Activated B cell treated with CpG ODN at 0.5 μM for 24 hours (primary cell): ENCODE measurements at regions of chr12 and their contacts with region 1.

Region 1: GRCh38 chr12:3872800-3873636 is at the start of gene PARP11:
- DNase-seq: peak; percentile 91
- ATAC-seq: peak; percentile 98
- H3K4me3 Mint-ChIP-seq: peak within 1 kb of the TSS; percentile 91
- H3K27ac Mint-ChIP-seq: peak within 1 kb of the TSS; percentile 93
- H3K4me1 Mint-ChIP-seq: peaks cover 48% of the 10 kb centered on the region
- H3K27me3 Mint-ChIP-seq: peaks cover 3% of the 10 kb centered on the region
- CTCF ChIP-seq: no peak
- total RNA-seq, gene PARP11: 21.4 and 27.2 TPM in 2 replicates

Region 2: DNA sequence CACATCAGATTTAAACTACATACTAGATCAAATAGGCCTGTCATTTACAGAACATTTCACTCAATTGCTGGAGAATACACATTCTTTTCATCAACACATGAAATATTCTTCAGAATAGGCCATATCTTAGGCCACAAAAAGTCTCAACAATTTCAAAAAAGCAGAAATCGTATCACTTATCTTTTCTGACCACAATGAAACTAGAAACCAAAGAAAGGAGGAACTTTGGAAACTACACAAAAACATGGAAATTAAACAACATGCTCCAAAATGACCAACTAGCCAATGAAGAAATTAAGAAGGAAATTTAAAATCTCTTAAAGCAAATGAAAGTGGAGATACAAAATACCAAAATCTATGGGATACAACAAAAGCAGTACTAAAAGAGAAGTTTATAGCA is 34.9 kb before region 1 on chr12:
- CTCF ChIA-PET with region 1: no interaction called
- POLR2A ChIA-PET with region 1: interaction called, 5 read pairs
- intact Hi-C with region 1: loop called (anchors 1 kb)
- DNase-seq: no peak
- ATAC-seq: no peak
- H3K4me3 Mint-ChIP-seq: peak overlapping the region; percentile 83
- H3K27ac Mint-ChIP-seq: peak overlapping the region; percentile 88
- H3K4me1 Mint-ChIP-seq: peaks cover 42% of the 10 kb centered on the region
- H3K27me3 Mint-ChIP-seq: no peaks in the 10 kb centered on the region
- CTCF ChIP-seq: no peak

Region 3: DNA sequence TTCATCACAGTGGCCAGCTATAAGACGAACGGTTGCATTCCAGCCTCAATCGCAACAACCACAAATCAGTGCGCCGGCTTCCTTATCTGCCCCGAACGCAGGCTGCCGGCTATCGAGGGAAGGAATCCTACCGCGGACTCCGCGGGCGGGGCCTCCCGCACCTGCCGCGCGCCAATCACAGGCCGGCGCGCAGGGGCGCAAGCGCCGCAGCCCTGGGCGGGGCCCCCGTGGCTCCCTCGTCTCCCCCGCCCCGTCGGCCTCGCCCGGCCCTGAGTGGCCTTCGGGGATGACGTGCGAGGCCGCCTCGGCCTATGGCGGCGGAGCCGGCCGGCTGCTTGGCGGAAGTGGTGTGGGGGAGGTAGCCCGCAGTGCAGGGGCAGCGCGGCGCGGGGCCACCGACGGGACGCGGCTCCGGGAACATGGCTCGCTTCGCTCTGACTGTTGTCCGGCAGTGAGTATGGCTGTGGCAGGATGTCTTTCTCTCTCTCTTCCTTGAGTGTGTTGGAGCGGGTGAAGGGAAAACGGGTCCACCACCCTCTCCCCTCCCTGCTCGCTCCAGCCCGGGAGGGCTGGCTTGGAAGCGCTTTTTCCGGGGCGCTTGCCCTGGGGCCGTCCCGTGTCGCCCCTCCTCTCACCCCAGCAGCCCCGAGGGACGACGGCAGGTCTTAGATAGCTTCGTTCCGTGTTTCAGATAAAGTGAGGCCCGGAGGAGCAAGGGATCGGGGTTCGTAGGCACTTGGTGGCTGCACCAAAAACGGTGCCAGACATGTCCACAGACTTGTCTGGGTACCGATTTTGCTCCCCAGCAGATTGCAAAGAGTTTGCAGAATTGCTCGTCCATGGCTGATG is 448.1 kb after region 1 on chr12 and contains the start of gene TIGAR:
- CTCF ChIA-PET with region 1: no interaction called
- POLR2A ChIA-PET with region 1: interaction called, 4 read pairs
- intact Hi-C with region 1: loop called (anchors 1 kb)
- DNase-seq: peak; percentile 94
- ATAC-seq: peak; percentile 97
- H3K4me3 Mint-ChIP-seq: peak within 1 kb of the TSS; percentile 95
- H3K27ac Mint-ChIP-seq: peak within 1 kb of the TSS; percentile 92
- H3K4me1 Mint-ChIP-seq: peaks cover 34% of the 10 kb centered on the region
- H3K27me3 Mint-ChIP-seq: no peaks in the 10 kb centered on the region
- CTCF ChIP-seq: no peak
- total RNA-seq, gene TIGAR: 10.0 and 10.2 TPM in 2 replicates

Region 4: GRCh38 chr12:4379405-4379804 is 506.4 kb after region 1 on chr12 and contains the start of gene FGF23:
- CTCF ChIA-PET with region 1: no interaction called
- POLR2A ChIA-PET with region 1: no interaction called
- intact Hi-C with region 1: no loop called
- DNase-seq: no peak
- ATAC-seq: no peak
- H3K4me3 Mint-ChIP-seq: no peak within 1 kb of the TSS
- H3K27ac Mint-ChIP-seq: no peak within 1 kb of the TSS
- H3K4me1 Mint-ChIP-seq: no peaks in the 10 kb centered on the region
- H3K27me3 Mint-ChIP-seq: peaks cover 17% of the 10 kb centered on the region
- CTCF ChIP-seq: no peak
- total RNA-seq, gene FGF23: not detected in 2 replicates

Region 5: GRCh38 chr12:4648501-4649357 is 775.7 kb after region 1 on chr12 and contains the starts of genes AKAP3 and NDUFA9:
- CTCF ChIA-PET with region 1: no interaction called
- POLR2A ChIA-PET with region 1: no interaction called
- intact Hi-C with region 1: loop called (anchors 1 kb)
- DNase-seq: peak; percentile 67
- ATAC-seq: peak; percentile 94
- H3K4me3 Mint-ChIP-seq: peak within 1 kb of the TSS; percentile 89
- H3K27ac Mint-ChIP-seq: peak within 1 kb of the TSS; percentile 88
- H3K4me1 Mint-ChIP-seq: peaks cover 49% of the 10 kb centered on the region
- H3K27me3 Mint-ChIP-seq: no peaks in the 10 kb centered on the region
- CTCF ChIP-seq: no peak
- total RNA-seq, gene AKAP3: 3.4 and 3.7 TPM in 2 replicates
- total RNA-seq, gene NDUFA9: 108 and 125 TPM in 2 replicates